Lower lobe of right lung (tissue), 2 donors: ENCODE measurements at regions of chr6 and their contacts with region 1.

Region 1: GRCh38 chr6:157019733-157020132 is 242.6 kb downstream of the ARID1B start:
- DNase-seq: no peak
- ATAC-seq: no peak
- H3K4me3 ChIP-seq: peak overlapping the region; percentile 75
- H3K27ac ChIP-seq: peak overlapping the region; percentile 98
- H3K4me1 ChIP-seq: peaks cover 36% of the 10 kb centered on the region
- H3K27me3 ChIP-seq: no peaks in the 10 kb centered on the region
- CTCF ChIP-seq: no peak

Region 2: DNA sequence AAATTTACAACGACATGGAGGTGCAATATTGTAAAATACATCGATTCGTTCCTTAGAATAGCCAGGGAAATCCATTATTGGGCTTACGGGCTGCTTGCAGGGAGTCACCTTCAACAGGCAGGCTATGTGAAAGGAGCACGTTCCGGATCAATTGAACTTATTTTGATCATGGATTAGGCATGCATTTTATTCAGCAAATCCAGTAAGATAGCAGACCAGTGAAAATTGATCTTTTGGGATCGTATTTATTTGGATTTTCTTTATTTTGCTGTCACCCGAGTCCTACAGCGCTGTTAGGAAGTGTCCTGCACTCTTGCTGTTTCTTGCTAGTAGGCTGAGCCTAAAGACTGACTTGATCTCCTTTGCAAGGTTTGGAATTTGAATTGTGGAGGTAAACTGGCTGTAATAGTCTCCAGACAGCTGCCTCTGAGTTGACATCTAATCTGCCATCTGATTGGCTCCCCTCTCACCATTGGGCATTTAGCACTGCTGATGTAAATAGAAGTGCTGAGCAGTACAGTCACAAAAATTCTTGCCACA is 239.6 kb before region 1 on chr6:
- intact Hi-C with region 1: loop called (anchors 10 kb)
- DNase-seq: no peak
- ATAC-seq: peak; percentile 67 to 78
- H3K4me3 ChIP-seq: peak overlapping the region; percentile 71
- H3K27ac ChIP-seq: peak overlapping the region; percentile 92
- H3K4me1 ChIP-seq: peaks cover 55% of the 10 kb centered on the region
- H3K27me3 ChIP-seq: no peaks in the 10 kb centered on the region
- CTCF ChIP-seq: no peak